Lower leg skin (tissue), 4 donors: ENCODE measurements at regions of chrX and their contacts with region 1.

Region 1: DNA sequence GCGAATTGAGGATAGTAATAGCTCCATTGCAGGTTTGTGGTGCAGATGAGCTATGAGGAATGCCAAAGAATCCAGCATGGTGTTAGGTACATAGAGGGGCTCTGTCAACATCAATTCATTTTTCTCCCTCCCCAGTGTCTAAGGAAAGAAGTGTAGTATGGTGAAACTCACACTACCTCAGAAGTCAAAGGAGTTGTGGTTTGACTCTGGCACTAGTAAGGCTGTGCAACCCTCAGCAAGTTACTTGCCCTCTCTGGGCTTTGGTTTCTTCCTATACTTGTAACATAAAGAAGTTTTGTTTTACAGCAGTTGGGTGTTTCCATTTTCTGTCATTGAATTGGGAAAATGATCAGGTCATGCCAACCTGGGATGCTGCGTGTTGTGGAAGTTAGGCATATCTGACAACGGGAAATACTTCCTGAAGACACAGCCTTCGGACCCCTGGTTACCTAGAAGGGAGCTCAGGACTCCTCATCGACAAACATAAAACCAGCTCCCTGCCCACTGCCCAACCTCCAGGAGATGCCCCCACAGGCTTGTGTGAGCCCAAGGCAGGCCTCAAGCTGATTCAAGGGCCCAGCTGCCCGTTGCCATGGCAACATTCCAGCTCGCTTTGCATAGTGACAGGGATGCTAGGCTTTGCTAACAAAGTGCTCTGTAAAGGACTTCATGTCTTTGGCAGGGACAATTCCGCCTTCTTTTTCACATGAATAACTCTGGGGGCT is 71.4 kb downstream of the RTL5 start:
- DNase-seq: no peak
- H3K4me3 ChIP-seq: no peak overlapping the region
- CTCF ChIP-seq: no peak
- POLR2A ChIP-seq: no peak

Region 2: GRCh38 chrX:70769659-70770232 is 1290.6 kb before region 1 on chrX:
- intact Hi-C with region 1: loop called (anchors 5 kb)
- DNase-seq: no peak
- H3K4me3 ChIP-seq: no peak overlapping the region
- CTCF ChIP-seq: no peak
- POLR2A ChIP-seq: no peak

Region 3: GRCh38 chrX:72201836-72202536 is 141.6 kb after region 1 on chrX:
- intact Hi-C with region 1: no loop called
- DNase-seq: no peak
- H3K4me3 ChIP-seq: no peak overlapping the region
- CTCF ChIP-seq: no peak
- POLR2A ChIP-seq: no peak